GM10248 (cell line): ENCODE measurements at regions of chr11 and their contacts with region 1.

Region 1: GRCh38 chr11:27158722-27159679 is 118.4 kb downstream of the BBOX1 start:
- DNase-seq: peak; percentile 45
- CTCF ChIP-seq: peak; percentile 63

Region 2: GRCh38 chr11:26283852-26284408 is 875.1 kb before region 1 on chr11:
- CTCF ChIA-PET with region 1: interaction called, 13 read pairs
- POLR2A ChIA-PET with region 1: no interaction called
- DNase-seq: no peak
- CTCF ChIP-seq: no peak

Region 3: GRCh38 chr11:26297189-26297975 is 861.6 kb before region 1 on chr11:
- CTCF ChIA-PET with region 1: interaction called, 35 read pairs
- POLR2A ChIA-PET with region 1: no interaction called
- DNase-seq: peak; percentile 28
- CTCF ChIP-seq: peak; percentile 79

Region 4: GRCh38 chr11:26753723-26754504 is 405.1 kb before region 1 on chr11:
- CTCF ChIA-PET with region 1: interaction called, 23 read pairs
- POLR2A ChIA-PET with region 1: no interaction called
- DNase-seq: no peak
- CTCF ChIP-seq: peak; percentile 44

Region 5: GRCh38 chr11:27148506-27148905 is 10.5 kb before region 1 on chr11:
- CTCF ChIA-PET with region 1: interaction called, 10 read pairs
- POLR2A ChIA-PET with region 1: no interaction called
- DNase-seq: no peak
- CTCF ChIP-seq: no peak